Endothelial cell of umbilical vein (primary cell): ENCODE measurements at regions of chrX and their contacts with region 1.

Region 1: GRCh38 chrX:152830312-152831305 is at the starts of genes CETN2 and NSDHL:
- DNase-seq: peak; percentile 97
- H3K4me3 ChIP-seq: peak within 1 kb of the TSS; percentile 79 to 87 (median 84)
- H3K27ac ChIP-seq: peak within 1 kb of the TSS; percentile 53
- H3K4me1 ChIP-seq: peaks cover 18% of the 10 kb centered on the region
- H3K27me3 ChIP-seq: no peaks in the 10 kb centered on the region
- CTCF ChIP-seq: no peak
- POLR2A ChIP-seq: peak; percentile 56
- total RNA-seq, gene CETN2: 28.2 and 28.6 TPM in 2 replicates
- total RNA-seq, gene NSDHL: 40.0 and 43.4 TPM in 2 replicates

Region 2: GRCh38 chrX:152897222-152898131 is 66.9 kb after region 1 on chrX and contains the start of gene ZNF185:
- CTCF ChIA-PET with region 1: no interaction called
- POLR2A ChIA-PET with region 1: no interaction called
- dilution Hi-C with region 1: no loop called
- intact Hi-C with region 1: loop called (anchors 2 kb)
- DNase-seq: peak; percentile 54
- H3K4me3 ChIP-seq: peak within 1 kb of the TSS; percentile 31 to 50 (median 48)
- H3K27ac ChIP-seq: peak within 1 kb of the TSS; percentile 56
- H3K4me1 ChIP-seq: peaks cover 21% of the 10 kb centered on the region
- H3K27me3 ChIP-seq: no peaks in the 10 kb centered on the region
- CTCF ChIP-seq: no peak
- POLR2A ChIP-seq: no peak
- total RNA-seq, gene ZNF185: 19.7 and 31.6 TPM in 2 replicates

Region 3: DNA sequence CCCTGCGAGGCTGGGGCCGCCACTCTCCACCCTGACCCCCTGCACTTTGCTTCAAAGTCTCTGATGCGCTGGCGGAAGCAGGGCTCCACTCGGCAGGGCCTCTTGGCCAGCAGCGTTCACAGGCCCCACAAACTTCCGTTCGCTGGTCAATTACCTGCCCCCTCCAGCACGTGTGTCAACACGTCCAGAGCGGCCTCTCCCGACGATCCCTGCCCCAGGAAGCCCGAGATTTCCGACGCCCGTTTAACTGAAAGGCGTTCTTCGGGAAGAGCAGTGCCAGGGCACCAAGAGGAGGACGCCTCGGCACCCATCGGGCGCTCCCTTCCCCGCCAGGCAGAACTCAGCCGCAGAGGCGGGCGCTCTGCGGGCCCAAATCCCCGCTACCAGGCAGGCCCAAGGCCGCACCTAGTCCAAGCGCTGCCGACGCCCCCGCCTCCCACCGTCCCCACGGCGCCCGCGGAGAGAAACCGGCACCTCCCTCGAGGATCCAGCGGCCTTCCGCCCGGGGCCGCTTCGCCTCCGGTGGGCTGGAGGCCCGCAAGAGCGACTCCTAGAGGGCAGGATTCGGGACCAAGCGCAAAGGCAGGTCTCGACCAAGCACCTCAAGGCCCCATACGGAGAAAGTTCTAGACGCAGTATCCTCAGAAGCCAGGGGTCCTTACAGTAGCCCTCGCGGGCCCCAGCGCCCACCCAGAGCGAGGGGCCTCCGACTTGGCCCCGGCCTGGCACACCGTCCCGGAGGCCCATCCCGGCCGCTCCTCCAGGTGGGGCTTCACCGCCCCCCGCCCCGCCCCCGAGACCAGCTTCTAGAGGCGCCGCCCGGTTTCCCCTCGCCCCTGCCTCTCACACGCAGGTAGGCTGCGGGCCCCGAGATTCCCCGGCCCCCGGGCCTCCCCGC is 893.0 kb after region 1 on chrX:
- CTCF ChIA-PET with region 1: no interaction called
- POLR2A ChIA-PET with region 1: no interaction called
- dilution Hi-C with region 1: no loop called
- intact Hi-C with region 1: no loop called
- DNase-seq: peak; percentile 51
- H3K4me3 ChIP-seq: peak overlapping the region; percentile 41 to 73 (median 54)
- H3K27ac ChIP-seq: peak overlapping the region; percentile 42
- H3K4me1 ChIP-seq: peaks cover 28% of the 10 kb centered on the region
- H3K27me3 ChIP-seq: no peaks in the 10 kb centered on the region
- CTCF ChIP-seq: peak; percentile 10 to 48
- POLR2A ChIP-seq: no peak